PC-9 (cell line): ENCODE measurements at regions of chr3 and their contacts with region 1.

Region 1: GRCh38 chr3:158465074-158465473 is 105.9 kb upstream of the MLF1 start:
- DNase-seq: no peak
- H3K4me3 ChIP-seq: no peak overlapping the region
- H3K27ac ChIP-seq: no peak overlapping the region
- H3K4me1 ChIP-seq: no peaks in the 10 kb centered on the region
- H3K27me3 ChIP-seq: no peaks in the 10 kb centered on the region
- CTCF ChIP-seq: no peak

Region 2: GRCh38 chr3:158226429-158226828 is 238.6 kb before region 1 on chr3:
- CTCF ChIA-PET with region 1: no interaction called
- POLR2A ChIA-PET with region 1: no interaction called
- intact Hi-C with region 1: no loop called
- DNase-seq: no peak
- H3K4me3 ChIP-seq: no peak overlapping the region
- H3K27ac ChIP-seq: no peak overlapping the region
- H3K4me1 ChIP-seq: no peaks in the 10 kb centered on the region
- H3K27me3 ChIP-seq: no peaks in the 10 kb centered on the region
- CTCF ChIP-seq: no peak

Region 3: GRCh38 chr3:158483701-158484235 is 18.7 kb after region 1 on chr3:
- CTCF ChIA-PET with region 1: interaction called, 11 read pairs
- POLR2A ChIA-PET with region 1: no interaction called
- intact Hi-C with region 1: no loop called
- DNase-seq: no peak
- H3K4me3 ChIP-seq: no peak overlapping the region
- H3K27ac ChIP-seq: no peak overlapping the region
- H3K4me1 ChIP-seq: no peaks in the 10 kb centered on the region
- H3K27me3 ChIP-seq: no peaks in the 10 kb centered on the region
- CTCF ChIP-seq: no peak

Region 4: GRCh38 chr3:158544811-158545210 is 79.7 kb after region 1 on chr3:
- CTCF ChIA-PET with region 1: no interaction called
- POLR2A ChIA-PET with region 1: no interaction called
- intact Hi-C with region 1: no loop called
- DNase-seq: no peak
- H3K4me3 ChIP-seq: no peak overlapping the region
- H3K27ac ChIP-seq: no peak overlapping the region
- H3K4me1 ChIP-seq: no peaks in the 10 kb centered on the region
- H3K27me3 ChIP-seq: no peaks in the 10 kb centered on the region
- CTCF ChIP-seq: no peak

Region 5: GRCh38 chr3:158631991-158632390 is 166.9 kb after region 1 on chr3:
- CTCF ChIA-PET with region 1: no interaction called
- POLR2A ChIA-PET with region 1: no interaction called
- intact Hi-C with region 1: no loop called
- DNase-seq: no peak
- H3K4me3 ChIP-seq: no peak overlapping the region
- H3K27ac ChIP-seq: no peak overlapping the region
- H3K4me1 ChIP-seq: no peaks in the 10 kb centered on the region
- H3K27me3 ChIP-seq: no peaks in the 10 kb centered on the region
- CTCF ChIP-seq: no peak

Region 6: GRCh38 chr3:158644345-158644908 is 179.4 kb after region 1 on chr3 and contains the start of gene GFM1:
- CTCF ChIA-PET with region 1: no interaction called
- POLR2A ChIA-PET with region 1: no interaction called
- intact Hi-C with region 1: no loop called
- DNase-seq: peak; percentile 89 to 92
- H3K4me3 ChIP-seq: peak within 1 kb of the TSS; percentile 96
- H3K27ac ChIP-seq: peak within 1 kb of the TSS; percentile 59
- H3K4me1 ChIP-seq: peaks cover 16% of the 10 kb centered on the region
- H3K27me3 ChIP-seq: no peaks in the 10 kb centered on the region
- CTCF ChIP-seq: peak; percentile 78
- total RNA-seq, gene GFM1: 43.0 and 45.4 TPM in 2 replicates